ENCODE measurements at regions of chr22 and their contacts with region 1.

Region 1: GRCh38 chr22:28741758-28742561 is at the starts of genes CHEK2 and HSCB:
- DNase-seq: peak; percentile 99
- H3K4me3 ChIP-seq: peak within 1 kb of the TSS; percentile 69 to 95 (median 93)
- H3K27ac ChIP-seq: peak within 1 kb of the TSS; percentile 93 to 99 (median 98)
- H3K4me1 ChIP-seq: peaks cover 0 to 17% (median 11%) of the 10 kb centered on the region in 4 donors
- H3K27me3 ChIP-seq: no peaks in the 10 kb centered on the region
- CTCF ChIP-seq: no peak
- EP300 ChIP-seq: peak in 1 of 4 donors; percentile 19
- POLR2A ChIP-seq: peak; percentile 69 to 74
- total RNA-seq, gene CHEK2: 2.8 to 4.6 (median 3.6) TPM
- total RNA-seq, gene HSCB: 29.9 to 67.5 (median 32.5) TPM

Region 2: GRCh38 chr22:28600546-28601143 is 141.3 kb before region 1 on chr22:
- intact Hi-C with region 1: loop called (anchors 5 kb)
- DNase-seq: no peak
- H3K4me3 ChIP-seq: no peak overlapping the region
- H3K27ac ChIP-seq: no peak overlapping the region
- H3K4me1 ChIP-seq: peaks cover 0 to 13% (median 0%) of the 10 kb centered on the region in 4 donors
- H3K27me3 ChIP-seq: no peaks in the 10 kb centered on the region
- CTCF ChIP-seq: peak in 3 of 4 experiments; percentile 47 to 55 (median 48)
- EP300 ChIP-seq: no peak
- POLR2A ChIP-seq: no peak

Region 3: DNA sequence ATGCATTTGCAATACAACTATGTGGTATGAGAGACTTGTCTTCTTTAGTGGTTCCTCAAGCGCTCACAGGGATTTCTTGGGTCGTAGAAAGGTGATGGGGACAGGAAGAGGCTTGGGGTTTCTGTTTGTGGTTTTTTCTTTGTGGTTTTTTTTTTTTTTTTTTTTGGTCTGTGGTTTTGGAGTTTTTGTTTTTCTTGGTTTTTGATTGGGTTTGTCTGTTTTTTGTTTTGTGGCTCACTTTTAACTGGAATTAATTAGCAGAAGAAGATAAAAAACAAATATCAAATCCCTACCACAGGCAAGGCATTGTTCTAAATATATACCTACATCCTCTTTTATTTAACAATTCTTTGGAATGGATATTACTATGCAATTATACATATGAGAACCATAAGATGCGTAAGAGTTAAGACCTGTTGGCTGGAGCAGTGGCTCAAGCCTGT is 67.8 kb before region 1 on chr22:
- intact Hi-C with region 1: loop called (anchors 1 kb)
- DNase-seq: no peak
- H3K4me3 ChIP-seq: no peak overlapping the region
- H3K27ac ChIP-seq: no peak overlapping the region
- H3K4me1 ChIP-seq: peaks cover 0 to 9% (median 4%) of the 10 kb centered on the region in 4 donors
- H3K27me3 ChIP-seq: no peaks in the 10 kb centered on the region
- CTCF ChIP-seq: no peak
- EP300 ChIP-seq: no peak
- POLR2A ChIP-seq: no peak

Region 4: GRCh38 chr22:28772633-28773460 is 30.9 kb after region 1 on chr22 and contains the start of gene CCDC117:
- intact Hi-C with region 1: loop called (anchors 2 kb)
- DNase-seq: peak; percentile 97
- H3K4me3 ChIP-seq: peak within 1 kb of the TSS; percentile 63 to 99 (median 95)
- H3K27ac ChIP-seq: peak within 1 kb of the TSS; percentile 97 to 100 (median 100)
- H3K4me1 ChIP-seq: peaks cover 0 to 36% (median 25%) of the 10 kb centered on the region in 4 donors
- H3K27me3 ChIP-seq: no peaks in the 10 kb centered on the region
- CTCF ChIP-seq: no peak
- EP300 ChIP-seq: peak in 1 of 4 donors; percentile 51
- POLR2A ChIP-seq: peak in 1 of 2 donors; percentile 54
- total RNA-seq, gene CCDC117: 23.9 to 33.2 (median 29.8) TPM

Region 5: GRCh38 chr22:28799606-28800307 is 57.8 kb after region 1 on chr22:
- intact Hi-C with region 1: loop called (anchors 2 kb)
- DNase-seq: peak; percentile 85
- H3K4me3 ChIP-seq: peak overlapping the region; percentile 74 to 100 (median 87)
- H3K27ac ChIP-seq: peak overlapping the region; percentile 96 to 100 (median 100)
- H3K4me1 ChIP-seq: peaks cover 0 to 63% (median 49%) of the 10 kb centered on the region in 4 donors
- H3K27me3 ChIP-seq: no peaks in the 10 kb centered on the region
- CTCF ChIP-seq: no peak
- EP300 ChIP-seq: no peak
- POLR2A ChIP-seq: no peak

Region 6: GRCh38 chr22:28829358-28830181 is 87.6 kb after region 1 on chr22:
- intact Hi-C with region 1: loop called (anchors 5 kb)
- DNase-seq: peak; percentile 89
- H3K4me3 ChIP-seq: no peak overlapping the region
- H3K27ac ChIP-seq: peak overlapping the region in 3 of 4 donors; percentile 9 to 39 (median 10)
- H3K4me1 ChIP-seq: peaks cover 0 to 12% (median 4%) of the 10 kb centered on the region in 4 donors
- H3K27me3 ChIP-seq: no peaks in the 10 kb centered on the region
- CTCF ChIP-seq: peak; percentile 95 to 98 (median 96)
- EP300 ChIP-seq: no peak
- POLR2A ChIP-seq: no peak

Region 7: GRCh38 chr22:28882878-28883656 is 141.1 kb after region 1 on chr22 and contains the start of gene ZNRF3:
- intact Hi-C with region 1: loop called (anchors 5 kb)
- DNase-seq: peak; percentile 97
- H3K4me3 ChIP-seq: peak within 1 kb of the TSS; percentile 49 to 71 (median 64)
- H3K27ac ChIP-seq: peak within 1 kb of the TSS; percentile 77 to 87 (median 80)
- H3K4me1 ChIP-seq: peaks cover 0 to 46% (median 36%) of the 10 kb centered on the region in 4 donors
- H3K27me3 ChIP-seq: no peaks in the 10 kb centered on the region
- CTCF ChIP-seq: no peak
- EP300 ChIP-seq: no peak
- POLR2A ChIP-seq: no peak
- total RNA-seq, gene ZNRF3: 8.9 to 13.6 (median 9.7) TPM